Endothelial cell of umbilical vein (primary cell): ENCODE measurements at regions of chr18 and their contacts with region 1.

Region 1: GRCh38 chr18:55265984-55266383 is 306.7 kb upstream of the CCDC68 start:
- DNase-seq: peak; percentile 75
- H3K4me3 ChIP-seq: no peak overlapping the region
- H3K27ac ChIP-seq: peak overlapping the region; percentile 73
- H3K4me1 ChIP-seq: peaks cover 67% of the 10 kb centered on the region
- H3K27me3 ChIP-seq: no peaks in the 10 kb centered on the region
- CTCF ChIP-seq: no peak
- POLR2A ChIP-seq: peak; percentile 30

Region 2: DNA sequence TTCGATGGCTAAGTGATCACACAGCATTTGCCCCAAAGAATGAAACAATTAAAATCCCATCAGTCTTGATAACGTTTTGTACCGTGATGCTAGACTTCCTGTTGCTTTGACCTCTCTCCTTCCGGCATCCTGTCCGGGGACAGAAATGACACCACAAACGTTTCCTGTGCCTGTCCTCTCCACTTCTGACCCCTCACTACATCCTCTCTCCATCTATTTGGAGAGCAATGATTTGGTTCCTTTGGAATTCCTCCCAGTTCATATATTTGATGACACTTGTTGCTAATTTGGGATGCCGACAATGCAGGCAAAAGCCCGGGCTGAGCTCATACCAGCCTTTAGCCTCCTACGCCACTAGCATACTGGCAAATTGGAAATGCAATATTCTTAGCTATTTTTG is 155.5 kb before region 1 on chr18:
- CTCF ChIA-PET with region 1: no interaction called
- POLR2A ChIA-PET with region 1: no interaction called
- dilution Hi-C with region 1: no loop called
- intact Hi-C with region 1: loop called (anchors 1 kb)
- DNase-seq: peak; percentile 73
- H3K4me3 ChIP-seq: no peak overlapping the region
- H3K27ac ChIP-seq: peak overlapping the region; percentile 90
- H3K4me1 ChIP-seq: peaks cover 23% of the 10 kb centered on the region
- H3K27me3 ChIP-seq: no peaks in the 10 kb centered on the region
- CTCF ChIP-seq: no peak
- POLR2A ChIP-seq: peak; percentile 35

Region 3: GRCh38 chr18:55251254-55251971 is 14.6 kb before region 1 on chr18:
- CTCF ChIA-PET with region 1: interaction called, 11 read pairs
- POLR2A ChIA-PET with region 1: interaction called, 6 read pairs
- dilution Hi-C with region 1: no loop called
- intact Hi-C with region 1: loop called (anchors 1 kb)
- DNase-seq: peak; percentile 86
- H3K4me3 ChIP-seq: peak overlapping the region in 1 of 3 experiments; percentile 32
- H3K27ac ChIP-seq: peak overlapping the region; percentile 62
- H3K4me1 ChIP-seq: peaks cover 44% of the 10 kb centered on the region
- H3K27me3 ChIP-seq: no peaks in the 10 kb centered on the region
- CTCF ChIP-seq: no peak
- POLR2A ChIP-seq: no peak

Region 4: GRCh38 chr18:55322178-55322735 is 56.3 kb after region 1 on chr18:
- CTCF ChIA-PET with region 1: interaction called, 4 read pairs
- POLR2A ChIA-PET with region 1: interaction called, 4 read pairs
- dilution Hi-C with region 1: no loop called
- intact Hi-C with region 1: loop called (anchors 1 kb)
- DNase-seq: peak; percentile 96
- H3K4me3 ChIP-seq: peak overlapping the region; percentile 28 to 89 (median 52)
- H3K27ac ChIP-seq: peak overlapping the region; percentile 82
- H3K4me1 ChIP-seq: peaks cover 66% of the 10 kb centered on the region
- H3K27me3 ChIP-seq: no peaks in the 10 kb centered on the region
- CTCF ChIP-seq: peak; percentile 4 to 20
- POLR2A ChIP-seq: no peak

Region 5: DNA sequence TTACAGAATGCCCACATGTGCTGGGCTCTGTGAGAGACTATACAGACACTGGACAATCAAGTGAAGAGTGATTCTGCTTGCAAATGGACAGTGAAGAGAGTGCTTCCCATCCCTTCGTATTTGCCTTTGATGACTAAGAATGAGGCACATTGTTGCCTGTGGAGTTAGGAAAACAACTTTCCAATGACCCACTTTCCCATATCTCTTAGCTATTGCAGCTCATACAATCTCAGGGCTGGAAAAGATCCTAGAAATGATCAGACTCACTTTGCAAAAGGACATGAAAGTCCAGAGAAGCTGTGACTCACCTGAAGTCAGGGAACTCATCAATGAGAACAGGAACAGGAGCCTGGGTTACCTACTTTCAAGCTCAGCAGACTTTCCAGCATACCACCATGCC is 762.5 kb after region 1 on chr18:
- CTCF ChIA-PET with region 1: no interaction called
- POLR2A ChIA-PET with region 1: no interaction called
- dilution Hi-C with region 1: no loop called
- intact Hi-C with region 1: loop called (anchors 10 kb)
- DNase-seq: peak; percentile 8
- H3K4me3 ChIP-seq: no peak overlapping the region
- H3K27ac ChIP-seq: no peak overlapping the region
- H3K4me1 ChIP-seq: peaks cover 5% of the 10 kb centered on the region
- H3K27me3 ChIP-seq: no peaks in the 10 kb centered on the region
- CTCF ChIP-seq: no peak
- POLR2A ChIP-seq: no peak

Region 6: DNA sequence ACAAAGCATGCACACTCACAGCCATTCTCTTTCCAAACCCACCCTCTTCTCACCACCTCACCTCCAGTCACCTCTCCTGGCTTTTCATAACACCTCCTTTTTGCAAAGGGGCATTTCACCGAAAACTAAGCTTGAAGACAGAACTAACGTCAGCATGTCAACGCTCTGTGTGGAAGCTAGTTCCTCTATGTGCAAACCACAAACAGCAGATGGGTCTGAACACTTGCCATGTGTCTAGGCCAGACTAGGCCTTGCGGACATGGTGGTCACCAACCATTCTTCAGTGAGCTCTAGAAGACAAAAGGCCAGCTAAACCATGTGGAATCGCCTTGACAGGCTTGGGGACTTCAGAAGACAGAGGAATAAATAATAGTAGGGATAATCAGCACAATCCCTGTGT is 1223.9 kb after region 1 on chr18:
- CTCF ChIA-PET with region 1: no interaction called
- POLR2A ChIA-PET with region 1: no interaction called
- dilution Hi-C with region 1: no loop called
- intact Hi-C with region 1: no loop called
- DNase-seq: no peak
- H3K4me3 ChIP-seq: no peak overlapping the region
- H3K27ac ChIP-seq: no peak overlapping the region
- H3K4me1 ChIP-seq: no peaks in the 10 kb centered on the region
- H3K27me3 ChIP-seq: peaks cover 5 to 16% of the 10 kb centered on the region in 2 experiments
- CTCF ChIP-seq: no peak
- POLR2A ChIP-seq: no peak